H1 (cell line): ENCODE measurements at regions of chr1 and their contacts with region 1.

Region 1: GRCh38 chr1:176559878-176560277 is 96.9 kb downstream of the PAPPA2 start:
- DNase-seq: peak; percentile 17 to 70
- H3K4me3 ChIP-seq: no peak overlapping the region
- H3K27ac ChIP-seq: no peak overlapping the region
- H3K4me1 ChIP-seq: peaks cover 0 to 4% (median 0%) of the 10 kb centered on the region in 4 experiments; a peak in 3 of 7 replicates
- H3K27me3 ChIP-seq: no peaks in the 10 kb centered on the region
- CTCF ChIP-seq: peak; percentile 56 to 92 (median 78)
- EP300 ChIP-seq: no peak
- POLR2A ChIP-seq: no peak
- RAD21 ChIP-seq: peak; percentile 97 to 98

Region 2: DNA sequence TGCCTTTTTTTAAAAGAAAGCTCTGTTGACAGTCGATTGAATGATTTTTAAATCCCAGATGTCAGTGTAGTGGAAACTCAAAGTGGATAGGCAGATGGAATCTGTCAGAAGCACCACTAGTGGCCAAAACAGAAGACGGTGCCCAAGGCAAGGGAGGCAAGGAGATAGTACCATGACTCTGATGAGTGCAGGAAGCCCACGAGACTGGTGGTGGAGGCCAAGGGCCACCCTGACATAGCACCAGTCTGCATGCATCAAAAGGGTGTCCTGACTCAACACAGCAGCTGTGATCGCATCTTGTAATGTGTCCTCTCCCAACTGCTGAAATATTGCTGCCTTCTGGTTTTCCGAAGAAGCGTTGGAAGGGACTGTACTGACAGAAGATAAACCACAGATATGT is 221.0 kb before region 1 on chr1:
- CTCF ChIA-PET with region 1: no interaction called
- POLR2A ChIA-PET with region 1: no interaction called
- DNase-seq: no peak
- H3K4me3 ChIP-seq: no peak overlapping the region
- H3K27ac ChIP-seq: no peak overlapping the region
- H3K4me1 ChIP-seq: no peaks in the 10 kb centered on the region
- H3K27me3 ChIP-seq: no peaks in the 10 kb centered on the region
- CTCF ChIP-seq: no peak
- EP300 ChIP-seq: no peak
- POLR2A ChIP-seq: no peak
- RAD21 ChIP-seq: no peak

Region 3: DNA sequence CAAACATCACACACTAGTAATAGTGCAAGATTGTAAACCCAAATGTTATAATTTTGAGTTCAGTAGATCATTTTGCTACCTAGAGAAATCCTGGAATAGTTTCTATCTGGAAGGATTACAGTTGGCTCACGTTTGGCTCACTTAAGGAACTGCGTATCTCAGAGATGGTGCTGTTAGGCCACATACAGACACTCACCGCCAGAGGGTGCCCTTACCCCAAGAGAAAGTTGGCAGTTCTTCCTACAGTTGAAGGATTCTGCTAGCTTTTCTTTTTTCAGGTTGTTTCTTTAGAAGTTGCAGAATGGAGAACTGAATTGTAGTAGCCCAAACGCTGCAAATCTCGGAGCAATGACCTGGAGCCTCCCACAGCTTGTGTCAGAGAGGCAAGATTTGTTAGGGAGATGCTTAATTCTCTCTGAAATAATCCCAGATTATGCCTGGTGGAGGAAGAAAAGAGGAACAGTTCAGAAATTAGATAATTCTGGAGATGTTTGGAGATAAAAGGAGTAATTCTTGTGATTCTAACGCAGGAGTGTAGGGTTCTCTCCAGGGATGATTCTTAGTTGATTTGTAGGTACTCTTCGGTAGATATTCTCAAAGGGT is 184.8 kb before region 1 on chr1:
- CTCF ChIA-PET with region 1: interaction called, 10 read pairs
- POLR2A ChIA-PET with region 1: no interaction called
- DNase-seq: peak; percentile 58 to 93
- H3K4me3 ChIP-seq: no peak overlapping the region
- H3K27ac ChIP-seq: no peak overlapping the region
- H3K4me1 ChIP-seq: no peaks in the 10 kb centered on the region
- H3K27me3 ChIP-seq: no peaks in the 10 kb centered on the region
- CTCF ChIP-seq: peak; percentile 71 to 93 (median 93)
- EP300 ChIP-seq: no peak
- POLR2A ChIP-seq: no peak
- RAD21 ChIP-seq: peak; percentile 98 to 100

Region 4: DNA sequence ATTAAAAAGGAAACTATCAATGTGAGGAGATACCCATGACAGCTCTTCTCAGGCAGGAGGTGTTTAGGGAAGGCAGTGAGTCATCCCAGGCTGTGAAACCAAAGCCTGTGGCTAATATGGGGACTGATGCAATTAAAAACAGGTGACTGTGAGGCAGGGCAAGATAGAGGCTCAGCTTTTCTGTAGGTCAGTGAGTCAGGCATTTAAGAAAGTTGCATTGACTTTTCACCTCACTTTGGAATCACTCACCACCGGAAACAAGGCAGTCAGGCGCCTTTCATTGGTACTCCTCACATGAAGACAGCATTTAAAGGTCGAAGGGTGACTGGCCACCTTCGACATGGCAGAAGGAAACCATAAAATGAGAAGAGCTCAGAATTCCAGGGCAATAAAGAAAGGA is 42.4 kb before region 1 on chr1:
- CTCF ChIA-PET with region 1: no interaction called
- POLR2A ChIA-PET with region 1: no interaction called
- DNase-seq: no peak
- H3K4me3 ChIP-seq: no peak overlapping the region
- H3K27ac ChIP-seq: no peak overlapping the region
- H3K4me1 ChIP-seq: no peaks in the 10 kb centered on the region
- H3K27me3 ChIP-seq: no peaks in the 10 kb centered on the region
- CTCF ChIP-seq: no peak
- EP300 ChIP-seq: no peak
- POLR2A ChIP-seq: no peak
- RAD21 ChIP-seq: no peak

Region 5: DNA sequence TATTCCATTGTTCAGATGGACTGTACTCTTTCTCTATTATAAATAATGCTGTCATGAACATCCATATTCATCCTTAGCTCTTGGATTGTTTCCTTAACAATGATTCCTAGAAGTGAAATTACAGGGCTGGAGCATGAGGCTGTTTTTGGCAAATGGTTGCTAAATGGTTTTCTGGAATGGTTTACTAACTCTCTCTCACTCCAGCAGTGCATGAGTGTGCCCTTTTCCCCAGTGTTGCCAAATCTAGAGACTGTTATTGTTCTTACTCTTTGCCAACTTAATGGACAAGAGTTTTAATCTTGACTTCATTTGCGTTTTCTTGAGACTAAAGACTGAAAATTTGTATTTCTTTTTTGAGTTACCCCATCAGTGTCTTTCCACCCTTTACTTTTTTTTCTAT is 16.1 kb after region 1 on chr1:
- CTCF ChIA-PET with region 1: interaction called, 22 read pairs
- POLR2A ChIA-PET with region 1: no interaction called
- DNase-seq: no peak
- H3K4me3 ChIP-seq: no peak overlapping the region
- H3K27ac ChIP-seq: no peak overlapping the region
- H3K4me1 ChIP-seq: no peaks in the 10 kb centered on the region
- H3K27me3 ChIP-seq: no peaks in the 10 kb centered on the region
- CTCF ChIP-seq: no peak
- EP300 ChIP-seq: no peak
- POLR2A ChIP-seq: no peak
- RAD21 ChIP-seq: no peak

Region 6: DNA sequence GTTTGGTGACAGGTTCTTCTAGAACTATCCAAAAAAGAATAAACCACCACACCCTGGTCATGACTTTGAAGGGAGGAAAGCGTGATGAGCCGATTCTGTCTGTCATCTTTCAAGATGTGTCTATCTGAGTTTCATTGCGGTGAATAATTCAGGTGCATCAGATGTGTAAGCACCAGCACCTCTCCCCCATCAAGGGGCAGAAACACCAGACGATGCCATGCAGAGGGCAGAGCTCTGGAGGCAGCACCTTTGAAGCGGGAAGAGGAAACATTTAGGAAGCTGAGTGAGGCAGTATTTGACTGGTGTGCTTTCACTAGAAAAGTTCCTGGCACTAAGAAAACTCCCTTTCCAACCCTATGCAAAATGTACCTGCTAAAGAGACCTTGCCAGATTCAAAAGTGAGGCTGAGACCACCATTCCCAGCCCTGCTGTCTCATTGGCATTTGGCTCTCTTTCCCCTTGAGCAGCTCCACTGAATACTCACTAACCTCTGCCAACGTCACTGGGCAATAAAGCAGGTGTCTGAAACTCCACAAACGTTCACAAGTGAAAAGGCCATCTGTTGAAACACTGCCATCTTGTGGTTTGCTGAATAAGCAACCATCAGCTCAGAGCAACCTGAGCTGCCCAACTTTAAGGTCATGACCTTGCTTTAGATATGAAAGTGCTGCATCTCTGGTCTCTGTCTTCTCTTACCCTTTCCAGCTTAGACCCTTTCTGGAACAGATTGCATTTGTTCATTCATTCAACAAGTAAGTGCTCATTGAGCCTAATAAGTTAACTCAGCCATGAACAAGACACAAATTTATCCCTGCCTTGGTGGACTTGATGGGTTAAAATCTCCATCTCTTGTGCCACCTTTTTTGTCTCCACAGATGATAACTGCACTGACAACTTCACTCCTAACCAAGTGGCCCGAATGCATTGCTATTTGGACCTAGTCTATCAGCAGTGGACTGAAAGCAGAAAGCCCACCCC is 131.7 kb after region 1 on chr1:
- CTCF ChIA-PET with region 1: interaction called, 105 read pairs
- POLR2A ChIA-PET with region 1: no interaction called
- DNase-seq: peak in 1 of 2 experiments; percentile 9
- H3K4me3 ChIP-seq: no peak overlapping the region
- H3K27ac ChIP-seq: no peak overlapping the region
- H3K4me1 ChIP-seq: peaks cover 0 to 7% (median 5%) of the 10 kb centered on the region in 4 experiments; a peak in 4 of 7 replicates
- H3K27me3 ChIP-seq: no peaks in the 10 kb centered on the region
- CTCF ChIP-seq: peak in 2 of 3 experiments; percentile 84 to 90; a peak in 3 of 4 replicates
- EP300 ChIP-seq: no peak
- POLR2A ChIP-seq: no peak
- RAD21 ChIP-seq: peak; percentile 85 to 89

Region 7: DNA sequence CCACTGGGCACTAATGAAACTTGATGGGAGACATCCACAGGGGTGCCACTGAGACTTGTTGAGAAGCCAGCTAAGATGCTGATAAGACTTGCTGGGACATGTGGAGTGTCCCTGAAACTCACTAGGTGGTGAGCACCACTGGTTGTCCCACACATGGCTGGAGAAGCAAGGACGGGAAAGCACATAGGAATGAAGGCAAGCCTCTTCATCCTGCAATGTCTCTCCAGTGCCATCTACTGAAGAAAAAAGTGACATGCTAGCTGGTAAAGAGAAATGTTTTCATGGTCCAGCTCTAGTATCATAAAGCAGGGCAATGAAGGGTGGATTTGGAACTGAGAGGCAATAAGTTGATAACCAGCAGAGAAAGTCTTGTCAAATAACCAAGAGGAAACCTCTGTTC is 186.1 kb after region 1 on chr1:
- CTCF ChIA-PET with region 1: interaction called, 23 read pairs
- POLR2A ChIA-PET with region 1: no interaction called
- DNase-seq: no peak
- H3K4me3 ChIP-seq: no peak overlapping the region
- H3K27ac ChIP-seq: no peak overlapping the region
- H3K4me1 ChIP-seq: peaks cover 0 to 3% (median 0%) of the 10 kb centered on the region in 4 experiments; a peak in 1 of 7 replicates
- H3K27me3 ChIP-seq: no peaks in the 10 kb centered on the region
- CTCF ChIP-seq: peak in 2 of 3 experiments; percentile 29 to 55; a peak in 2 of 4 replicates
- EP300 ChIP-seq: no peak
- POLR2A ChIP-seq: no peak
- RAD21 ChIP-seq: peak; percentile 61

Region 8: GRCh38 chr1:176880954-176881595 is 321.2 kb after region 1 on chr1:
- CTCF ChIA-PET with region 1: interaction called, 59 read pairs
- POLR2A ChIA-PET with region 1: no interaction called
- DNase-seq: peak; percentile 64 to 90
- H3K4me3 ChIP-seq: no peak overlapping the region
- H3K27ac ChIP-seq: no peak overlapping the region
- H3K4me1 ChIP-seq: no peaks in the 10 kb centered on the region
- H3K27me3 ChIP-seq: no peaks in the 10 kb centered on the region
- CTCF ChIP-seq: peak; percentile 67 to 93 (median 79)
- EP300 ChIP-seq: no peak
- POLR2A ChIP-seq: no peak
- RAD21 ChIP-seq: peak; percentile 88 to 92